ENCODE measurements at regions of chr3 and their contacts with region 1.

Region 1: GRCh38 chr3:12658593-12659058 is 5.3 kb downstream of the RAF1 start:
- DNase-seq: no peak
- ATAC-seq: no peak
- H3K4me3 ChIP-seq: no peak overlapping the region
- H3K27ac ChIP-seq: peak overlapping the region; percentile 33 to 100 (median 66)
- H3K4me1 ChIP-seq: peaks cover 0 to 89% (median 68%) of the 10 kb centered on the region in 12 donors
- H3K27me3 ChIP-seq: no peaks in the 10 kb centered on the region
- CTCF ChIP-seq: no peak
- POLR2A ChIP-seq: no peak

Region 2: GRCh38 chr3:12629560-12629959 is 29.1 kb before region 1 on chr3:
- intact Hi-C with region 1: loop called in 3 of 10 experiments (anchors 2 to 5 kb)
- DNase-seq: peak in 4 of 5 donors; percentile 41 to 79 (median 58)
- ATAC-seq: peak; percentile 83 to 91 (median 87)
- H3K4me3 ChIP-seq: peak overlapping the region in 3 of 12 donors; percentile 7 to 23 (median 8)
- H3K27ac ChIP-seq: peak overlapping the region; percentile 26 to 81 (median 66)
- H3K4me1 ChIP-seq: peaks cover 2 to 80% (median 53%) of the 10 kb centered on the region in 12 donors
- H3K27me3 ChIP-seq: no peaks in the 10 kb centered on the region
- CTCF ChIP-seq: no peak
- POLR2A ChIP-seq: no peak